Activated T-helper 1 cell treated with anti-CD3 and anti-CD28 coated beads, Interleukin-12 subunit alpha, Interleukin-12 subunit beta, Interleukin-2, Interleukin-4 antibody, amounts not matched to agents 30 ng/mL and 10 ng/mL and 1 ng/mL, durations not matched to agents 14 hours and 24 hours and 36 hours (primary cell): ENCODE measurements at regions of chr12 and their contacts with region 1.

Region 1: GRCh38 chr12:103503977-103504376 is 8.2 kb upstream of the C12orf42 start:
- DNase-seq: peak; percentile 28
- H3K4me3 Mint-ChIP-seq: no peak overlapping the region
- H3K27ac Mint-ChIP-seq: no peak overlapping the region
- H3K4me1 Mint-ChIP-seq: peaks cover 41% of the 10 kb centered on the region
- H3K27me3 Mint-ChIP-seq: peaks cover 19% of the 10 kb centered on the region

Region 2: DNA sequence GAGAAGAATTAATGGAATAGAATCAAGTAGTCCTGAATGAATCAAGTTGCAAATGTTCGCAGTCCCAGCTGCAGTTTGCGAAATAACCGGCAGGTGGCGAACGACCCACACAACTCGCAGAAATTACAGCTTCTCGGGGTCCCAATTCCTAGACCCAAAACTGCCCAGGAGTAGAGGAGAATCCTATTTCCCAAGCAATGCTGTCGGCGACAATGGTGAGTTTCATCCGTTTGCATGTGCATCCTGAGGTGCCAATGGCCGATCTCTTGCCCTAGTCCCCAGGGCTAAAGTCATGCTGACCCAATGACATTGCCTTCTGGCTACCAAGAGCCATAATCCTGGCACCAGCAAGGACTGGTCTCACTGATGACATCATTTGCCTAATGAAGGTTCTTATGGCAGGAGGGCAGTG is 555.0 kb before region 1 on chr12:
- intact Hi-C with region 1: loop called (anchors 2 kb)
- DNase-seq: no peak
- H3K4me3 Mint-ChIP-seq: no peak overlapping the region
- H3K27ac Mint-ChIP-seq: no peak overlapping the region
- H3K4me1 Mint-ChIP-seq: peaks cover 21% of the 10 kb centered on the region
- H3K27me3 Mint-ChIP-seq: peaks cover 45% of the 10 kb centered on the region

Region 3: GRCh38 chr12:103102225-103102744 is 401.7 kb before region 1 on chr12:
- intact Hi-C with region 1: loop called (anchors 5 kb)
- DNase-seq: no peak
- H3K4me3 Mint-ChIP-seq: no peak overlapping the region
- H3K27ac Mint-ChIP-seq: peak overlapping the region; percentile 60
- H3K4me1 Mint-ChIP-seq: peaks cover 8% of the 10 kb centered on the region
- H3K27me3 Mint-ChIP-seq: no peaks in the 10 kb centered on the region

Region 4: GRCh38 chr12:103279444-103279843 is 224.5 kb before region 1 on chr12:
- intact Hi-C with region 1: loop called (anchors 1 kb)
- DNase-seq: peak; percentile 17
- H3K4me3 Mint-ChIP-seq: no peak overlapping the region
- H3K27ac Mint-ChIP-seq: peak overlapping the region; percentile 15
- H3K4me1 Mint-ChIP-seq: peaks cover 23% of the 10 kb centered on the region
- H3K27me3 Mint-ChIP-seq: peaks cover 14% of the 10 kb centered on the region

Region 5: GRCh38 chr12:103326190-103326589 is 177.8 kb before region 1 on chr12:
- intact Hi-C with region 1: loop called (anchors 5 kb)
- DNase-seq: no peak
- H3K4me3 Mint-ChIP-seq: no peak overlapping the region
- H3K27ac Mint-ChIP-seq: no peak overlapping the region
- H3K4me1 Mint-ChIP-seq: no peaks in the 10 kb centered on the region
- H3K27me3 Mint-ChIP-seq: no peaks in the 10 kb centered on the region

Region 6: DNA sequence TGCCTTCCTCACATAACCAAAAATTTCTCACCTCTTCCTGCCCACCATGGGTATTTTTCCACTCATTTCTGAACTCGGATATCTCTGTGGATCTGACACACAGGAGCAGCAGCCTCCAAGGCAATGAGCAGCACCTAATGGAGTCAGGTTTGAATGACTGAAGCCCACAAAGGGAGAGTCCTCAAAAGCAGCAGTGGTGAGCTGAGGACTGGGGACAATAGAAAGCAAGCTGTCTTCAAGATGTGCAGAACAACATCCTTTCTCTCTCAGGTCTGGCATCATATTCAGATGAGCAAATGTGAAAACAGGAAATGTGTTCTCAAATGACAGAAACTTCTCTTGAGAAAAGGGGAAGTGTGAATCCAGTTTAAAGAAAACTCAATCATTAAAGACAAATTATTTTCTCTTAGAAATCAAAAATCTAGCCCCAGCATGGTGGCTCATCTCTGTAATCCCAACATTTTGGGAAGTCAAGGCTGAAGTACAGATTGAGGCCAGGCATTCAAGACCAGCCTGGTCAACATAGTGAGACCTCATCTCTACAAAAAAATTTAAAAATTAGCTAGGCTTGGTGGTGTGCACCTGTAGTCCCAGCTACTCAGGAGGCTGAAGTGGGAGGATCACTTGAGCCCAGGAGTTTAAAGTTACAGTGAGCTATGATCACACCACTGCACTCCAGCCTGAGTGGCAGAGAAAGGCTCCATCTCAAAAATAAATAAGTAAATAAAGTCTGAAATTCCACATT is 62.4 kb before region 1 on chr12:
- intact Hi-C with region 1: loop called (anchors 1 kb)
- DNase-seq: peak; percentile 57
- H3K4me3 Mint-ChIP-seq: peak overlapping the region; percentile 73
- H3K27ac Mint-ChIP-seq: peak overlapping the region; percentile 89
- H3K4me1 Mint-ChIP-seq: peaks cover 28% of the 10 kb centered on the region
- H3K27me3 Mint-ChIP-seq: no peaks in the 10 kb centered on the region

Region 7: DNA sequence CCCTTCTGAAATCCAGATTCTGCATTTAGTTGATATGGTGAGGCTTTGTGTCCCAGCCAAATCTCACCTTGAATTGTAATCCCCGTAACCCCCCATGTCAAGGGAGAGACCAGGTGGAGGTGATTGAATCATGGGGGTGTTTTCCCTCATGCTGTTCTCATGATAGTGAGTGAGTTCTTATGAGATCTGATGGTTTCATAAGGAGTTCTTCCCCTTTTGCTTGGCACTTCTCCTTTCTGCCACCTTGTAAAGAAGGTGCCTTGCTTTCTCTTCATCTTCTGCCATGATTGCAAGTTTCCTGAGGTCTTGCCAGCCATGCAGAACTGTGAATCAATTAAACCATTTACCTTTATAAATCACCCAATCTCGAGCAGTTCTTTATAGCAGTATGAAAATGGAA is 14.9 kb after region 1 on chr12:
- intact Hi-C with region 1: no loop called
- DNase-seq: no peak
- H3K4me3 Mint-ChIP-seq: no peak overlapping the region
- H3K27ac Mint-ChIP-seq: no peak overlapping the region
- H3K4me1 Mint-ChIP-seq: no peaks in the 10 kb centered on the region
- H3K27me3 Mint-ChIP-seq: peaks cover 3% of the 10 kb centered on the region